HEK293T (cell line): ENCODE measurements at regions of chr5 and their contacts with region 1.

Region 1: DNA sequence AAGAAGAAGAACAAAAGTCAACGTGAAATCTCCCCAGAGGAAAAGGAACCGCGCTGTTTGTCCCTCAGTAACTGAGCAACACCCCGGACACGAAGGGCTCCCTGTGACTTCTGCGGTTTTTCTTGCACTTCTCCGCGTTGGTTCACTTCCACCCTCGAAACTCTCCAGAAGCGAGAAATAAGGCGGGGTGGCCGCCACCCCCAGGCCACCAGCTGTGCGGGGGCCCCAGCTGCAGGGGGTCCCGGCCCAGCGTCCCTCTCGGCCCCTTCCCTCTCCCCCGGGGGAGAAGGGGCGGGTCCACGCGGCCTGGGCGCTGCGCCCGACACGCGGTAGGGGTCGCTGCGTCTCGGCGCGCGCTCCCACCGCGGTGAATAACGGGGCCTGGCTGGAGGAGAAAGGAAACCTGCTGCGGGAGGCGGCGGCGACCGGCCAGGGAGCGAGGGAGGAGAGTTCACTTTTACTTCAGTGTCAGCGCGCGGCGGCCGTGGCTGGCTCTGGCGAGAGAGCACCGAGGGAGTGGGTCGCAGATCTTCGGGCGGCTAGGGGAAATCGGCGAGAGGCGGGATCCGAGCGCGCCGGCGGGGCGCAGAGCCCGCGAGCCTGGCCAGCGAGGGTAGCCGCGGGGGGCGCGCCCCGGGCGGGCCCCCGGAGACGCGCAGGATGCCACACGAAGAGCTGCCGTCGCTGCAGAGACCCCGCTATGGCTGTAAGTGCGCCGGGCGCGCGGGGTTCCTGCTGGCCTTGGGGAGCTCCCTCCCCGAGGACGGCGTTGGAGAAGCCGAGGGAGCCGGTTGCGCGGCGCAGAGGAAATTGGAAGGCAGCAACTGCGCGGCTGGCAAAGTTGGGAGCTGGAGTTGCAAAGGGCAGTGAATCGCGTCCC is at the start of gene IQGAP2:
- DNase-seq: peak; percentile 85

Region 2: GRCh38 chr5:76387845-76388635 is 15.1 kb before region 1 on chr5:
- CTCF ChIA-PET with region 1: interaction called, 11 read pairs
- POLR2A ChIA-PET with region 1: interaction called, 4 read pairs
- DNase-seq: no peak

Region 3: GRCh38 chr5:76413746-76414145 is 10.6 kb after region 1 on chr5:
- CTCF ChIA-PET with region 1: interaction called, 11 read pairs
- POLR2A ChIA-PET with region 1: interaction called, 6 read pairs
- DNase-seq: no peak

Region 4: DNA sequence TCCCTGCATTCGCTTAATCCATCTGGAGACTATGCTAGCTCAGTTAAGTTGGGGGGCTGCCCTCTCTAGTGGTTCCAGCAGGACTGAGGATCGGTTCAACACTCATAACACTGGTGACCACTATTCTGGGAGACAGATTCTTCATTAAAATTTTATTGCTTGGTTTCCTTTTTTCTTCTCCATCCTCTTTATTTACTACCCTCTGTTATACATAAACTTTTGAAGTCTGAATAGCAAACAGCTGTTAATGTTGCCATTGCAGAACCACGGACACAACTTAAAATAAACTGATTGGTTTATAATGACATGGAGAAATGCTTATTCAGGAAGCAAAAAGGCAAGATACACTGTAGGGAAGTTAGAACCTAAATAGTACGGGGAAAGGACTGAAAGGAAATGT is 22.0 kb after region 1 on chr5:
- CTCF ChIA-PET with region 1: interaction called, 10 read pairs
- POLR2A ChIA-PET with region 1: no interaction called
- DNase-seq: no peak

Region 5: GRCh38 chr5:76544268-76544926 is 141.3 kb after region 1 on chr5:
- CTCF ChIA-PET with region 1: interaction called, 20 read pairs
- POLR2A ChIA-PET with region 1: interaction called, 10 read pairs
- DNase-seq: peak; percentile 54